T-cell (primary cell): ENCODE measurements at regions of chr3 and their contacts with region 1.

Region 1: DNA sequence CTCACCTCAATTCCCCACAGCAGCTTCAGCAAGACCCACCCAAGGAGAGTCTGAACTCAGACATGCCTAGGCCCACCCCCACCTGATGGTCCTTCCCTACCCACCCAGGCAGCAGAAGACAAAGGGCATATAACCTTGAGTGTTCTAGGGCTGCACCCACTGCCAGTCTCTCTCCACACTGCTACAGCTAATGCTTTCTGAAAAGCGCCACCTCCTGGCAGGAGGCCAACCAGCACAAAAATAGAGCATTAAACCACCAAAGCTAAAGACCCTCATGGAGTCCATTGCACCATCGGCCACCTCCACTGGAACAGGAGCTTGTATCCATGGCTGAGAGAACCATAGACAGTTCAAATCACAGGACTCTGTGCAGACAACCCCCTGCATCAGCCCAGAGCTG is 11.3 kb upstream of the RPL39L start:
- DNase-seq: peak; percentile 18 to 71 (median 53)
- ATAC-seq: peak in 3 of 4 experiments; percentile 45 to 58 (median 55)
- H3K4me3 ChIP-seq: no peak overlapping the region
- H3K4me3 Mint-ChIP-seq: no peak overlapping the region
- H3K27ac ChIP-seq: no peak overlapping the region
- H3K27ac Mint-ChIP-seq: peak overlapping the region; percentile 13 to 28
- H3K4me1 ChIP-seq: peaks cover 0 to 5% of the 10 kb centered on the region in 2 experiments
- H3K4me1 Mint-ChIP-seq: peaks cover 7 to 14% (median 8%) of the 10 kb centered on the region in 3 donors
- H3K27me3 ChIP-seq: peaks cover 0 to 9% of the 10 kb centered on the region in 2 experiments
- H3K27me3 Mint-ChIP-seq: peaks cover 3 to 7% of the 10 kb centered on the region in 2 donors

Region 2: DNA sequence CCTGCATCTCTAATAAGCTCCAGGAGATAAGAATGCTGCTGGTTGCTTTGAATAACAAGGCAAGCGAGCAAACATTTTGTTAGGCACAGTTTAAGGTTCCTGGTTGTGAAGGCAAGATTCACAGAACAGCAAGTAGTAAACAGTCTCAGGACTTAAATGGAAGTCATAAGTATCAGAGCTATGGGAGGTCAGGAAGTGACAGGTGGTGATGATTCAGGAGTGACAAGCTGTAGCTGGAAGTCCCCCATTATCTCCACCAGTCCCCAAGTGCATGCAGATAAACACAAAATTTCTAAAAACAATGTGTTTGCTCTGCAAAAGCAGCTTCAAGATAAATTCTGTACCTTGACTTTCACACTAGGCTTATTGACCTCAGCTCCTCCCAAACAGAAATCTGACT is 507.1 kb before region 1 on chr3:
- CTCF ChIA-PET with region 1: interaction called in 1 of 2 experiments, 10 read pairs
- POLR2A ChIA-PET with region 1: no interaction called
- DNase-seq: no peak
- ATAC-seq: no peak
- H3K4me3 ChIP-seq: no peak overlapping the region
- H3K4me3 Mint-ChIP-seq: no peak overlapping the region
- H3K27ac ChIP-seq: no peak overlapping the region
- H3K27ac Mint-ChIP-seq: no peak overlapping the region
- H3K4me1 ChIP-seq: no peaks in the 10 kb centered on the region
- H3K4me1 Mint-ChIP-seq: no peaks in the 10 kb centered on the region
- H3K27me3 ChIP-seq: peaks cover 0 to 4% of the 10 kb centered on the region in 2 experiments
- H3K27me3 Mint-ChIP-seq: peaks cover 16 to 26% of the 10 kb centered on the region in 2 donors

Region 3: DNA sequence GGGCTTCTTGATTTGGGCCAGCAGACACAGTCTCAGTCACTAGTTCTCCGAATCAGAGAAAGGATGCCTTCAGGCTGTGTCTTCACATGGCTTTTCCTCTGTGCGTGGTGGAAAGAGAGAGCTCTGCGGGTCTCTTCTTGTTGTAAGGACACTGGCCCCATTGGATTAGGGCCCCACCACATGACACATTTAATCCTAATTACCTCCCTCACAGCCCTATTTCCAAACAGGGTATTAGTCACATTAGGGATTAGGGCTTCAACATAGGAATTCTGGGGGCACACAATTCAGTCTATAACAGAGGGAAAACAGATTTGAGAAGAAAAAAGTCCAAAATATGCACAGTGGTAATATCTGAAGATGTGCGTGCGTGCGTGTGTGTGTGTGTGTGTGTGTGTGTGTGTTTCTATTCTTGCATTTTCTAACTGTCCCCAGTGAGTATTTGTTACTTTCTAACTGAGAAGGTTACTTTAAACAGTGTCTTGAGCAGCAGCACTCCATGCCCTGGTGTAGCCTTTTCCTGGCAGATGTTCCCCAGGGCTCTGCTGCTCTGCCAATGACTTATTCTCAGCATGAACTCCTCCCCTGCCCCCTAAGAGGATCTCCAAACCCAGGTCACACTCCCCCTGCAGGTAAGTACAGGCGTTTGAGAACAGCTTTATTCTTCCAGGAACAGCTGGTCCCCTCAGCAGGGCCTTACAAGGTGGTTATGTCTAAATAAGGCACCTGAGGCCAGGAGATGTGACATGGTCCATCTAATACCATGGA is 84.2 kb before region 1 on chr3:
- CTCF ChIA-PET with region 1: no interaction called
- POLR2A ChIA-PET with region 1: interaction called in 1 of 2 experiments, 10 read pairs
- DNase-seq: peak in 34 of 35 experiments; percentile 15 to 75 (median 52)
- ATAC-seq: peak; percentile 66 to 79 (median 68)
- H3K4me3 ChIP-seq: no peak overlapping the region
- H3K4me3 Mint-ChIP-seq: peak overlapping the region in 1 of 3 donors; percentile 31
- H3K27ac ChIP-seq: peak overlapping the region; percentile 47
- H3K27ac Mint-ChIP-seq: peak overlapping the region; percentile 63 to 87
- H3K4me1 ChIP-seq: peaks cover 10 to 38% of the 10 kb centered on the region in 2 experiments
- H3K4me1 Mint-ChIP-seq: peaks cover 67 to 82% (median 79%) of the 10 kb centered on the region in 3 donors
- H3K27me3 ChIP-seq: no peaks in the 10 kb centered on the region
- H3K27me3 Mint-ChIP-seq: no peaks in the 10 kb centered on the region

Region 4: GRCh38 chr3:187079090-187080022 is 71.2 kb before region 1 on chr3:
- CTCF ChIA-PET with region 1: no interaction called
- POLR2A ChIA-PET with region 1: no interaction called
- DNase-seq: no peak
- ATAC-seq: no peak
- H3K4me3 ChIP-seq: no peak overlapping the region
- H3K4me3 Mint-ChIP-seq: no peak overlapping the region
- H3K27ac ChIP-seq: no peak overlapping the region
- H3K27ac Mint-ChIP-seq: peak overlapping the region; percentile 27 to 68
- H3K4me1 ChIP-seq: no peaks in the 10 kb centered on the region
- H3K4me1 Mint-ChIP-seq: peaks cover 8 to 12% (median 9%) of the 10 kb centered on the region in 3 donors
- H3K27me3 ChIP-seq: no peaks in the 10 kb centered on the region
- H3K27me3 Mint-ChIP-seq: no peaks in the 10 kb centered on the region

Region 5: GRCh38 chr3:187139126-187139894 is 11.3 kb before region 1 on chr3 and contains the start of gene RPL39L:
- CTCF ChIA-PET with region 1: interaction called, 6 to 28 read pairs
- POLR2A ChIA-PET with region 1: no interaction called
- DNase-seq: peak; percentile 85 to 96 (median 90)
- ATAC-seq: peak; percentile 96 to 99 (median 97)
- H3K4me3 ChIP-seq: peak within 1 kb of the TSS; percentile 54 to 65
- H3K4me3 Mint-ChIP-seq: peak within 1 kb of the TSS; percentile 85 to 88 (median 85)
- H3K27ac ChIP-seq: peak within 1 kb of the TSS; percentile 84
- H3K27ac Mint-ChIP-seq: peak within 1 kb of the TSS; percentile 87 to 92
- H3K4me1 ChIP-seq: peaks cover 0 to 16% of the 10 kb centered on the region in 2 experiments
- H3K4me1 Mint-ChIP-seq: peaks cover 18 to 21% (median 20%) of the 10 kb centered on the region in 3 donors
- H3K27me3 ChIP-seq: no peaks in the 10 kb centered on the region
- H3K27me3 Mint-ChIP-seq: no peaks in the 10 kb centered on the region
- total RNA-seq, gene RPL39L: 0.85 to 3.8 (median 2.1) TPM